GM13976 (cell line): ENCODE measurements at regions of chr7 and their contacts with region 1.

Region 1: DNA sequence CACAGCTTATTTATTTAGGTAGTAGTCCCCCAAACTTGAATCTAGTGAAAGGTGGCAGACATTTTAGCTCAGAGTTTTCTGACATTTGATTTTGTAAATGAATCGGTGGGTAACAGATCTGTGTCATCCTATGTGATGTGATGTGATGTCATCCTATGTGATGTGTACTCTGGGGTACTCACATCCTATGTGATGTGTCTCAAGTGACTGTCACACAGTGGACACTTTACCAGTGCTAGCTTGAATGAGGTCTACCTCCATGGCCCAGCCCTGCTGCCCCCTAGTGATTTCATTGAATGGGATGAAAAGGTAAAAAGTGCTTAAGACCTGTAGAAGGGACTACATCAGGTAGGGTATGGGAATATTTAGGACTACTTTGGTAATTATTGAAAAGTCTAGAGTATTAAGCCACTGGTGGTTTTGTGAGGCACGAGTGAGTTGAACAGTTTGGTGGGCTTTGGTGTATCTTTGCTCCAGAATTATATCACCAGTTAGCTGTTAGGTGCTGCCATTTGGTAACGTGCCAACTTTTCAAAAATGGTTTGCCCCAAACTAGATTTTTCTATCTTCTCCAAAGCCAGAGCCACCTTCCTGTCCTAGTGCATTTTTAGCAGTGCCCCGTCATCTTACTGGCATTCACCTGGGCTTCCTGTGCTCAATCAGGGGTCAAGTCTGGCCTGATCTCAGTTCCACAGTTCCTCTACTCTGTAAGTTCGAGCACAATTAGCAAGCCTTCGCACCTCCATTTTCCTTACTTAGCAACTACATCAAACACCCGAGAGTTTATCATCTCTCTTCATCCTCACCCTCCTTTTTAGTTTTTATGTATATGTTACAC is 9.7 kb downstream of the EIF4H start:
- DNase-seq: no peak
- CTCF ChIP-seq: peak; percentile 16

Region 2: GRCh38 chr7:73774923-73775322 is 408.9 kb before region 1 on chr7:
- in situ Hi-C with region 1: no loop called
- DNase-seq: no peak
- CTCF ChIP-seq: no peak

Region 3: GRCh38 chr7:73858807-73859206 is 325.0 kb before region 1 on chr7:
- in situ Hi-C with region 1: no loop called
- DNase-seq: no peak
- CTCF ChIP-seq: no peak

Region 4: DNA sequence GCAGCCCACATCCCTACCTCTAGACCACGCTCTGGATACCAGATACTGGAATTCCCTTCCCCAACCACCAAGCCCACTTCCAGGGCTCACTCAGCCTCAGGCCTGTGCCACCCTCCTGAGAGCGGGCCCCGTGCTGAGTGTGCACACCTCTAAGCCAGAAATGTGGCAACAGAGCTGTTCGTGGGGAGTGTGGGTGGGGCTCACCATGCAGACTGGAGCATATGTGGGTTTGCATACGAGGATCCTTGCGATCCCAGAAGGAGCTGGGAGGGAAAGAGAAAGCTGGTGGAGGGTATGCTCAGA is 113.3 kb before region 1 on chr7:
- in situ Hi-C with region 1: loop called (anchors 10 kb)
- DNase-seq: no peak
- CTCF ChIP-seq: no peak